Activated CD8-positive, alpha-beta T cell treated with anti-CD3 and anti-CD28 coated beads for 36 hours (primary cell): ENCODE measurements at regions of chr19 and their contacts with region 1.

Region 1: DNA sequence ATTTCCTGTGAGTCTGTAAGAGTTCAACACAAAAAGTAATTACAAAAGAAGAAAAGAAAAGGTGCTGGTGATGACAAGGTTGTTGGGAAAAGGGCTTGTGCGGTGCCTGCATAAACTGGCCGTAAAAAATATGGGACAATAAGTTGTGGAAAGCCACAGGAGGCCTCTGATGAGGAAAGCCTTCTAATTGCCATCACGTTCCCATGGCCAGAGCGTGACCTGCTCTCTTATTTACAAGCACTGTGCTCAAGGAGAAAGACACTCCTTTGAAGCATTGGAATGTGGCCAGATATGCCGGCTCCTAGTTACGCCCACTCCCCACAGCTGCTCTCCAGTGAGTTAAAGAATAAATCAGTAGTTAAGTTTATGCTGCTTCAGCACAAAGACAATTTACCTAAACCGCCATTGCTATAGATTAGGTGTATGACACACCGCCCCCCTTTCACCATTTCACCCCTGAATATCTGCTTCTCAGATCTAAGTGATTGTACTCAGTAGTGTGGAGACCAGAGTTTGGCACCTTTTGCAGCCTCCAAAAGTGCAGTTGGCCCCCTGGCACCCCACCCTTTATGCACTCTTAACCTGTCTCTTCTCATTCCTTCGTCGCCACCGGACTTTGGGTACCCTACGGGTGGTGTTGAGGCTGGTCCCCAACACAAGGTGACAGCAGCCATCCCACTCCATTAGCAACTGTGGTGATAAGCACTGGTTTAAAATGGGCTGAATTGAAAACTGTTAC is 8.1 kb upstream of the PGLYRP1 start:
- DNase-seq: no peak
- ATAC-seq: no peak
- H3K4me3 Mint-ChIP-seq: no peak overlapping the region
- H3K27ac Mint-ChIP-seq: no peak overlapping the region
- H3K4me1 Mint-ChIP-seq: peaks cover 12% of the 10 kb centered on the region
- H3K27me3 Mint-ChIP-seq: peaks cover 19% of the 10 kb centered on the region
- CTCF ChIP-seq: no peak

Region 2: GRCh38 chr19:46056536-46056935 is 25.6 kb after region 1 on chr19:
- CTCF ChIA-PET with region 1: interaction called, 29 read pairs
- POLR2A ChIA-PET with region 1: no interaction called
- intact Hi-C with region 1: no loop called
- DNase-seq: no peak
- ATAC-seq: no peak
- H3K4me3 Mint-ChIP-seq: no peak overlapping the region
- H3K27ac Mint-ChIP-seq: no peak overlapping the region
- H3K4me1 Mint-ChIP-seq: no peaks in the 10 kb centered on the region
- H3K27me3 Mint-ChIP-seq: peaks cover 42% of the 10 kb centered on the region
- CTCF ChIP-seq: no peak

Region 3: GRCh38 chr19:46090444-46090843 is 59.5 kb after region 1 on chr19:
- CTCF ChIA-PET with region 1: no interaction called
- POLR2A ChIA-PET with region 1: no interaction called
- intact Hi-C with region 1: no loop called
- DNase-seq: no peak
- ATAC-seq: no peak
- H3K4me3 Mint-ChIP-seq: no peak overlapping the region
- H3K27ac Mint-ChIP-seq: no peak overlapping the region
- H3K4me1 Mint-ChIP-seq: no peaks in the 10 kb centered on the region
- H3K27me3 Mint-ChIP-seq: peaks cover 40% of the 10 kb centered on the region
- CTCF ChIP-seq: no peak

Region 4: GRCh38 chr19:46192992-46193650 is 162.1 kb after region 1 on chr19:
- CTCF ChIA-PET with region 1: interaction called, 23 read pairs
- POLR2A ChIA-PET with region 1: interaction called, 3 read pairs
- intact Hi-C with region 1: loop called (anchors 10 kb)
- DNase-seq: no peak
- ATAC-seq: no peak
- H3K4me3 Mint-ChIP-seq: no peak overlapping the region
- H3K27ac Mint-ChIP-seq: no peak overlapping the region
- H3K4me1 Mint-ChIP-seq: no peaks in the 10 kb centered on the region
- H3K27me3 Mint-ChIP-seq: peaks cover 47% of the 10 kb centered on the region
- CTCF ChIP-seq: no peak